Caco-2 (cell line): ENCODE measurements at regions of chr10 and their contacts with region 1.

Region 1: GRCh38 chr10:25226775-25227682 is 52.2 kb downstream of the GPR158 start:
- DNase-seq: peak; percentile 57 to 71
- H3K4me3 ChIP-seq: no peak overlapping the region
- H3K4me3 Mint-ChIP-seq: no peak overlapping the region
- H3K27ac Mint-ChIP-seq: no peak overlapping the region
- H3K4me1 ChIP-seq: no peaks in the 10 kb centered on the region
- H3K4me1 Mint-ChIP-seq: no peaks in the 10 kb centered on the region
- H3K27me3 ChIP-seq: no peaks in the 10 kb centered on the region
- H3K27me3 Mint-ChIP-seq: peaks cover 7% of the 10 kb centered on the region
- CTCF ChIP-seq: peak; percentile 90 to 91

Region 2: GRCh38 chr10:24617771-24618391 is 609.1 kb before region 1 on chr10:
- CTCF ChIA-PET with region 1: interaction called, 3 read pairs
- POLR2A ChIA-PET with region 1: no interaction called
- intact Hi-C with region 1: loop called (anchors 1 kb)
- DNase-seq: peak; percentile 79 to 87
- H3K4me3 ChIP-seq: no peak overlapping the region
- H3K4me3 Mint-ChIP-seq: peak overlapping the region; percentile 67
- H3K27ac Mint-ChIP-seq: peak overlapping the region; percentile 69
- H3K4me1 ChIP-seq: peaks cover 21% of the 10 kb centered on the region
- H3K4me1 Mint-ChIP-seq: peaks cover 13% of the 10 kb centered on the region
- H3K27me3 ChIP-seq: no peaks in the 10 kb centered on the region
- H3K27me3 Mint-ChIP-seq: no peaks in the 10 kb centered on the region
- CTCF ChIP-seq: peak; percentile 94 to 99

Region 3: GRCh38 chr10:25026463-25026862 is 200.6 kb before region 1 on chr10:
- CTCF ChIA-PET with region 1: interaction called, 3 read pairs
- POLR2A ChIA-PET with region 1: no interaction called
- intact Hi-C with region 1: loop called (anchors 1 kb)
- DNase-seq: no peak
- H3K4me3 ChIP-seq: no peak overlapping the region
- H3K4me3 Mint-ChIP-seq: no peak overlapping the region
- H3K27ac Mint-ChIP-seq: no peak overlapping the region
- H3K4me1 ChIP-seq: no peaks in the 10 kb centered on the region
- H3K4me1 Mint-ChIP-seq: no peaks in the 10 kb centered on the region
- H3K27me3 ChIP-seq: no peaks in the 10 kb centered on the region
- H3K27me3 Mint-ChIP-seq: no peaks in the 10 kb centered on the region
- CTCF ChIP-seq: peak; percentile 47 to 52